ENCODE measurements at regions of chr1 and their contacts with region 1.

Region 1: DNA sequence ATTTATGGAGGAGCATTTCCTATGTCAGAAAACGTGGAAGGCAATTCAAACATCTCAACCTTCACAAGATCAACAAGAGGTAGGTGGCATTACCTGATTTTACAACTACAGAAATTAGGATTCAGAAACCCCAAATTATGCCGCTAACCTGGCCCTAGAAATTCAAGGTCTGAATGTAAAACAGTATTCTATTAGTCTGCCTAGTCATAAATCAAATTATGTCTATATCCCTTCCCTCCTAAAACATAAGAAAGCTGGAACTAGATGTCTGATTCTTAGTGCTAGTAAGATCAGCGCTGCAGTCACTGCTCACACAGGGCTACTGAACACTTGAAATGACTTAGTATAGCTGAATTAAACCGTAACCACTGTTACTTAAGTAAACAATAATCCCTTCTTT is 1.4 kb downstream of the TOMM20 start:
- DNase-seq: no peak
- ATAC-seq: no peak
- H3K4me3 ChIP-seq: peak overlapping the region; percentile 82
- H3K27ac ChIP-seq: peak overlapping the region; percentile 91 to 98
- H3K4me1 ChIP-seq: peaks cover 14% of the 10 kb centered on the region; the same call in 2 of the 3 replicates
- CTCF ChIP-seq: no peak
- EP300 ChIP-seq: no peak
- POLR2A ChIP-seq: no peak
- RAD21 ChIP-seq: no peak

Region 2: GRCh38 chr1:235105051-235106043 is 21.9 kb before region 1 on chr1:
- CTCF ChIA-PET with region 1: interaction called, 13 read pairs
- POLR2A ChIA-PET with region 1: interaction called, 4 read pairs
- DNase-seq: no peak
- ATAC-seq: peak; percentile 15 to 22; a peak in 4 of 6 replicates
- H3K4me3 ChIP-seq: no peak overlapping the region
- H3K27ac ChIP-seq: no peak overlapping the region; a peak in 1 of 6 replicates
- H3K4me1 ChIP-seq: peaks cover 9% of the 10 kb centered on the region; the same call in 2 of the 3 replicates
- CTCF ChIP-seq: no peak
- EP300 ChIP-seq: no peak
- POLR2A ChIP-seq: no peak
- RAD21 ChIP-seq: no peak

Region 3: GRCh38 chr1:235145639-235146038 is 18.4 kb after region 1 on chr1:
- CTCF ChIA-PET with region 1: interaction called, 10 read pairs
- POLR2A ChIA-PET with region 1: no interaction called
- DNase-seq: no peak
- ATAC-seq: 0 out of 6 replicates have a peak, but pooled peaks of 1 of the 2 experiments have one; percentile 19
- H3K4me3 ChIP-seq: no peak overlapping the region
- H3K27ac ChIP-seq: no peak overlapping the region
- H3K4me1 ChIP-seq: no peaks in the 10 kb centered on the region
- CTCF ChIP-seq: no peak
- EP300 ChIP-seq: no peak
- POLR2A ChIP-seq: no peak
- RAD21 ChIP-seq: no peak